AG04449 (cell line): ENCODE measurements at regions of chr15 and their contacts with region 1.

Region 1: GRCh38 chr15:58201516-58201915 is 63.3 kb downstream of the AQP9 start:
- DNase-seq: no peak
- H3K4me3 ChIP-seq: no peak overlapping the region
- CTCF ChIP-seq: no peak

Region 2: GRCh38 chr15:57418661-57419060 is 782.9 kb before region 1 on chr15:
- CTCF ChIA-PET with region 1: no interaction called
- POLR2A ChIA-PET with region 1: no interaction called
- DNase-seq: no peak
- H3K4me3 ChIP-seq: no peak overlapping the region
- CTCF ChIP-seq: no peak

Region 3: DNA sequence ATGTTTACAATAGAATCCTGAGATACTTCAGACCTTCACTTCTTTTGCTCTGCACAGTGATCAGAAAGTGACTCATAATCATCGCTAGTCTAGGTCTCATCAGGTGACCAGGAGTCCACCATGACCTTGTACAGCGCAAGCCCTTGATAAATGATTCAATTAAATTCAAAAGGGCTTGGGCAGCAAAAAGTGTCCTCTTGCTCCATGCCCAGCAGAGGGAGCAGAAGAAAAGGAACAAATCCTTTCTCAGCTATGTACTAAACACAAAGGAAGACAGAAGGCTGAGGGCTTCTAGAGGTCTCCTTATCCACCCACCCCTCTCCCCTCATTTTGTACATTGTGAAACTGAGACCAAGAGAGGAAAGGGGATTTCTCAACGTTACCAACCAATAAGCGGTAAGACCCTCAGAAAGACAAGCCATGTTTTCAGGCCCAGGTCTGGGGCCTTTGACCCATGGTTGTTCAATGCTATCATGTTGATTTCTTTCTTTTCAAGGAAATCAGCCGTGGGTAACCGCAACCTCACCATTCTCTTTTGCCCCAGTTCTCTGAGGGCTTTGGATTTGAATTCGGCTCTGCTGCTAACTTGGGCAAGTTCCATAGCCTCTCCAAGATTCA is 11.5 kb after region 1 on chr15:
- CTCF ChIA-PET with region 1: interaction called, 11 read pairs
- POLR2A ChIA-PET with region 1: no interaction called
- DNase-seq: no peak
- H3K4me3 ChIP-seq: no peak overlapping the region
- CTCF ChIP-seq: peak; percentile 52

Region 4: DNA sequence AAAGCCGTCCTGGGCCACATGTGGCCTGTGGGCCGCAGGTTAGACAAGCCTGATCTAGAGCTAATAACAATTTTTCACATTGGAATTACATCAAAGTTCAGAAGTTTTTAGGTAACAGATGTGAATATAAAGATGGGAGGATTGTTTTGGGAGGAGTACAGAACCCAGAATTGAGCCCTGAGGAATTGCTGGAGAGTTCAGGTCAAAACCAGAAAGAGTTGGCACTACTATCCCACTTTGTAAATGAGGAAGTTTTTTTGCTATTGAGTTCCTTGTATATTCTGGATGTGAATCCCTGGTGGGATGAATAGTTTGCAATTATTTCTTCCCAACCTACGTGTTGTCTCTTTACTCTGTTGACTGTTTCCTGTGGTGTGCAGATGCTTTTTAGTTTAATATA is 120.7 kb after region 1 on chr15:
- CTCF ChIA-PET with region 1: no interaction called
- POLR2A ChIA-PET with region 1: no interaction called
- DNase-seq: no peak
- H3K4me3 ChIP-seq: no peak overlapping the region
- CTCF ChIP-seq: no peak

Region 5: GRCh38 chr15:58724466-58724865 is 523.0 kb after region 1 on chr15:
- CTCF ChIA-PET with region 1: no interaction called
- POLR2A ChIA-PET with region 1: no interaction called
- DNase-seq: no peak
- H3K4me3 ChIP-seq: no peak overlapping the region
- CTCF ChIP-seq: no peak